H1 (cell line): ENCODE measurements at regions of chr15 and their contacts with region 1.

Region 1: GRCh38 chr15:81939604-81940440 is 106.0 kb downstream of the MEX3B start:
- DNase-seq: peak; percentile 15 to 53
- H3K4me3 ChIP-seq: no peak overlapping the region
- H3K27ac ChIP-seq: no peak overlapping the region
- H3K4me1 ChIP-seq: peaks cover 0 to 5% (median 1%) of the 10 kb centered on the region in 4 experiments; a peak in 2 of 7 replicates
- H3K27me3 ChIP-seq: no peaks in the 10 kb centered on the region
- CTCF ChIP-seq: peak in 2 of 3 experiments; percentile 57 to 72; a peak in 3 of 4 replicates
- EP300 ChIP-seq: no peak
- POLR2A ChIP-seq: no peak
- RAD21 ChIP-seq: peak; percentile 86 to 88

Region 2: DNA sequence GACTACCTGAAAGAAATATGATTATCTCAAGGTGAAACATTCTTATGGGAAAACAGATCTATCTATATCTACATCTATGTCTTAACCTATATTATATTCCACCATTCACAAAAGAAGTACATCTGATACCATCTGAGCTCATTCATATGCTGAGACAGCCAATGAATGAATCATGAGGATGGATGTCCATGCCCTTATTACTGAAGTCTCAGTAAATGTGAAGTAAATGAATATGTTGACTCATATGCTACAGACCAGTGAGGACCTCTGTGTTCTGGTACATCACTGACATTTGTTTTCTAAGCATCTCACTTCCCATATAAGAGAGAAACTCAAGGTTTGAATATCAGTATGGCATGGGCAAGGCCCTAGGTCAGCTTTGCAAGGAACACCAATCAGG is 254.6 kb before region 1 on chr15:
- CTCF ChIA-PET with region 1: no interaction called
- POLR2A ChIA-PET with region 1: no interaction called
- DNase-seq: no peak
- H3K4me3 ChIP-seq: no peak overlapping the region
- H3K27ac ChIP-seq: no peak overlapping the region
- H3K4me1 ChIP-seq: no peaks in the 10 kb centered on the region
- H3K27me3 ChIP-seq: no peaks in the 10 kb centered on the region
- CTCF ChIP-seq: no peak
- EP300 ChIP-seq: no peak
- POLR2A ChIP-seq: no peak
- RAD21 ChIP-seq: no peak

Region 3: GRCh38 chr15:81819924-81820635 is 119.7 kb before region 1 on chr15:
- CTCF ChIA-PET with region 1: interaction called, 15 read pairs
- POLR2A ChIA-PET with region 1: no interaction called
- DNase-seq: no peak
- H3K4me3 ChIP-seq: no peak overlapping the region
- H3K27ac ChIP-seq: no peak overlapping the region
- H3K4me1 ChIP-seq: no peaks in the 10 kb centered on the region
- H3K27me3 ChIP-seq: no peaks in the 10 kb centered on the region
- CTCF ChIP-seq: no peak
- EP300 ChIP-seq: no peak
- POLR2A ChIP-seq: no peak
- RAD21 ChIP-seq: no peak

Region 4: GRCh38 chr15:81888748-81889484 is 50.9 kb before region 1 on chr15:
- CTCF ChIA-PET with region 1: no interaction called
- POLR2A ChIA-PET with region 1: no interaction called
- DNase-seq: no peak
- H3K4me3 ChIP-seq: no peak overlapping the region
- H3K27ac ChIP-seq: no peak overlapping the region
- H3K4me1 ChIP-seq: no peaks in the 10 kb centered on the region
- H3K27me3 ChIP-seq: no peaks in the 10 kb centered on the region
- CTCF ChIP-seq: no peak
- EP300 ChIP-seq: no peak
- POLR2A ChIP-seq: no peak
- RAD21 ChIP-seq: no peak

Region 5: DNA sequence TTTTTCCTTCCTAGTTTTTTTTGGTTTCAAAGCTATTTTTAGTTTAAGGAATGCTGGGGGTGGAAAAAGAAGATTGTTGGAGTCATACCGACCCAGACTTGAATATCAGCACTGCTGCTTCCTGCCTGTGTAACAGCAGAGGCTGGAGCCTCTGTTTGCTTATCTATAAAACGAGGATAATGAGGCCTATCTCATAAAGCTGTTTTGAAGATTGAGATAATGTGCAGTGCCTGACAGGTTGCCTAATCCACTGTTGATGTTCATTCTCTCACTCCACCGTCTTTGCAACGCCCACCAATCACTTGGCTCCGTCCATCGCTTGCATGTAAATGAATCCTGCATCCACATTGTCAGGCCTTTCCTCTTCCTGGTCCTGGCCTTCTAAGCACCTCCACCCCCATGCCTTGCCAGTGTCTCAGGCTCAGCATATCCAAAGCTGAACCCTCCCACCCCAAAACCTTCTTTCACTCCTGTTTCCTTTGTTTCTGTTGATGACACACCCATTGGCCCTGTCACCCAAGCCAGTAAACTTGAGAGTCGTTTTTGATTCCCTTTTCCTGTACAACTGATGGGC is 11.1 kb after region 1 on chr15:
- CTCF ChIA-PET with region 1: interaction called, 20 read pairs
- POLR2A ChIA-PET with region 1: no interaction called
- DNase-seq: no peak
- H3K4me3 ChIP-seq: no peak overlapping the region
- H3K27ac ChIP-seq: no peak overlapping the region
- H3K4me1 ChIP-seq: no peaks in the 10 kb centered on the region
- H3K27me3 ChIP-seq: no peaks in the 10 kb centered on the region; a peak in 1 of 7 replicates
- CTCF ChIP-seq: no peak
- EP300 ChIP-seq: no peak
- POLR2A ChIP-seq: no peak
- RAD21 ChIP-seq: no peak

Region 6: GRCh38 chr15:82030176-82030687 is 90.4 kb after region 1 on chr15:
- CTCF ChIA-PET with region 1: no interaction called
- POLR2A ChIA-PET with region 1: no interaction called
- DNase-seq: no peak
- H3K4me3 ChIP-seq: no peak overlapping the region
- H3K27ac ChIP-seq: no peak overlapping the region
- H3K4me1 ChIP-seq: no peaks in the 10 kb centered on the region
- H3K27me3 ChIP-seq: no peaks in the 10 kb centered on the region
- CTCF ChIP-seq: no peak
- EP300 ChIP-seq: no peak
- POLR2A ChIP-seq: no peak
- RAD21 ChIP-seq: no peak